Caco-2 (cell line): ENCODE measurements at regions of chr13 and their contacts with region 1.

Region 1: GRCh38 chr13:63249411-63250187 is 1834.0 kb upstream of the PCDH20 start:
- DNase-seq: no peak
- H3K4me3 ChIP-seq: no peak overlapping the region
- H3K4me3 Mint-ChIP-seq: no peak overlapping the region
- H3K27ac Mint-ChIP-seq: no peak overlapping the region
- H3K4me1 ChIP-seq: no peaks in the 10 kb centered on the region
- H3K4me1 Mint-ChIP-seq: no peaks in the 10 kb centered on the region
- H3K27me3 ChIP-seq: no peaks in the 10 kb centered on the region
- H3K27me3 Mint-ChIP-seq: no peaks in the 10 kb centered on the region
- CTCF ChIP-seq: no peak

Region 2: GRCh38 chr13:63124863-63125262 is 124.7 kb before region 1 on chr13:
- CTCF ChIA-PET with region 1: no interaction called
- POLR2A ChIA-PET with region 1: no interaction called
- intact Hi-C with region 1: loop called (anchors 2 kb)
- DNase-seq: no peak
- H3K4me3 ChIP-seq: no peak overlapping the region
- H3K4me3 Mint-ChIP-seq: no peak overlapping the region
- H3K27ac Mint-ChIP-seq: no peak overlapping the region
- H3K4me1 ChIP-seq: no peaks in the 10 kb centered on the region
- H3K4me1 Mint-ChIP-seq: no peaks in the 10 kb centered on the region
- H3K27me3 ChIP-seq: no peaks in the 10 kb centered on the region
- H3K27me3 Mint-ChIP-seq: no peaks in the 10 kb centered on the region
- CTCF ChIP-seq: peak; percentile 9 to 40